Activated naive CD4-positive, alpha-beta T cell treated with anti-CD3 and anti-CD28 coated beads for 36 hours (primary cell): ENCODE measurements at regions of chr2 and their contacts with region 1.

Region 1: DNA sequence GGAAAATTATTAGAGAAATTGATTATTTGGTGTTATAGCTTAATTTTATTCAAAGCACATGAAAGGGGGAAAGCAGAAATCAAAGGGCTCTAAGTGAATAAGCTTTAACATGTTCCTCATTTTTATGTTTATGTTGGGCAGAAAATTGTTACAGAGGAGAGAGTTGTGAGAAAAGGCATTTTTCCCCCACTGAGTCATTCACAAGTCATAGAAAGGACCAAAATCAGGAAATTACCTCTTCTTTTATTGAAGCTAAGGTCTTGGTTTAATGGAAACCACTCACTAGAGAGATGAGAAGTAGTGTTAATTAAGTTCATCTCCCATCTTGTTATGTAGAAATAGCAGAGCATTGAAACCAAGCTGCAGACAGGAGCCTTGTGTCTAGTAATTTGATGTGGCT is 175.3 kb upstream of the THUMPD2 start:
- DNase-seq: no peak
- H3K4me3 Mint-ChIP-seq: no peak overlapping the region
- H3K27ac Mint-ChIP-seq: peak overlapping the region; percentile 86
- H3K4me1 Mint-ChIP-seq: peaks cover 19% of the 10 kb centered on the region
- H3K27me3 Mint-ChIP-seq: peaks cover 3% of the 10 kb centered on the region

Region 2: DNA sequence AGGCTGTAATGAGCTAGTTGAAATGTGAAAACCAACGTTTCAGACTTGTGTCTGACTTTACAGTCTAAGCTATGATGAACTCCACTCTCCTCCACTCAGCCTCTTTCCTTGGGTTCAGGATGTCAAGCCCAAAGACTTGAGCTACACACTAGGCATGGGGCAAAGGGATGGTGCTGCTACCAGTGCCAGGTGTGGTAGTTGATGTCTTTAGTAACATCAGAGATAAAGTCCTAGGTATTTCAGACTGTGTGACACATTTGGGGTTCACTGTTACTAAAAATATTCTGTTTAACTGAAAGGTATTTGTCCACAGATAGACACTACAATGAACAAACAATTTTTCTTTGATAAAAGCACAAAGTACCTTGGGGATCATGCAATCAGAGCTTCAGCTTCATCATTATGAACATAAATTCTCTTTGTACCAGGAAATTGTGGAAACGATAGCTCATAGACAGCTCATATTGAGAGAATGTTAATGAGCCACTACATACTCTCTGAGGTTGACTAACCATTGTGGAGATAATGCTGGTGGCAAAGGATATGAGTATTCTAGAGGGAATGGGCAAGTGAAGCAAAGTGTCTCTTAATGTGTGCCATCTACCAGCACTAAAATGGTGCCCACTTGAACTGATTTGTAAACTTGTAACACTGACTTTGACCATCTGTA is 78.4 kb after region 1 on chr2:
- CTCF ChIA-PET with region 1: no interaction called
- intact Hi-C with region 1: loop called (anchors 2 kb)
- DNase-seq: no peak
- H3K4me3 Mint-ChIP-seq: no peak overlapping the region
- H3K27ac Mint-ChIP-seq: peak overlapping the region; percentile 74
- H3K4me1 Mint-ChIP-seq: peaks cover 7% of the 10 kb centered on the region
- H3K27me3 Mint-ChIP-seq: no peaks in the 10 kb centered on the region

Region 3: GRCh38 chr2:40212804-40213470 is 258.6 kb after region 1 on chr2:
- CTCF ChIA-PET with region 1: no interaction called
- intact Hi-C with region 1: no loop called
- DNase-seq: no peak
- H3K4me3 Mint-ChIP-seq: no peak overlapping the region
- H3K27ac Mint-ChIP-seq: no peak overlapping the region
- H3K4me1 Mint-ChIP-seq: peaks cover 2% of the 10 kb centered on the region
- H3K27me3 Mint-ChIP-seq: peaks cover 2% of the 10 kb centered on the region